Activated naive CD4-positive, alpha-beta T cell treated with anti-CD3 and anti-CD28 coated beads for 36 hours (primary cell): ENCODE measurements at regions of chr4 and their contacts with region 1.

Region 1: DNA sequence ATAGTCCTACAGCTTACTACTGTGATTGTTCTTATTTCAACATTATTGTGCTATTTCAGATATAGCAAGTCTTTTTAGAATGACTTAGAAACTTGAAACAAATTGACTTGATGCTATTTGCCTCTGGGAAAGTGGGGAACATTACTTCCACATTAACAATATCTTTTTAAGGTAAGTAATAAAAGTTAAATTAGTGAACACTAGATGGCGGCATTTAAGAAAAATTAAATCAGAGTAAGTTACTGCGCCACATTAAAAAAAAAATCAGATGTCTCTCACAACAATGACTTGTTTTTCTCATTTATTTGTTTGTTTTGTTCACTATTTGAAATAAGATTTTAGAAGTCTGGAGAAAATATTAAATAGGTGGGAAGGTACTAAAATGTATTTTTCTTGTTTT is 1026.9 kb upstream of the SLIT2 start:
- DNase-seq: no peak
- H3K4me3 Mint-ChIP-seq: no peak overlapping the region
- H3K27ac Mint-ChIP-seq: no peak overlapping the region
- H3K4me1 Mint-ChIP-seq: no peaks in the 10 kb centered on the region
- H3K27me3 Mint-ChIP-seq: no peaks in the 10 kb centered on the region

Region 2: GRCh38 chr4:19508442-19508841 is 283.6 kb after region 1 on chr4:
- CTCF ChIA-PET with region 1: no interaction called
- intact Hi-C with region 1: no loop called
- DNase-seq: no peak
- H3K4me3 Mint-ChIP-seq: no peak overlapping the region
- H3K27ac Mint-ChIP-seq: no peak overlapping the region
- H3K4me1 Mint-ChIP-seq: no peaks in the 10 kb centered on the region
- H3K27me3 Mint-ChIP-seq: no peaks in the 10 kb centered on the region

Region 3: DNA sequence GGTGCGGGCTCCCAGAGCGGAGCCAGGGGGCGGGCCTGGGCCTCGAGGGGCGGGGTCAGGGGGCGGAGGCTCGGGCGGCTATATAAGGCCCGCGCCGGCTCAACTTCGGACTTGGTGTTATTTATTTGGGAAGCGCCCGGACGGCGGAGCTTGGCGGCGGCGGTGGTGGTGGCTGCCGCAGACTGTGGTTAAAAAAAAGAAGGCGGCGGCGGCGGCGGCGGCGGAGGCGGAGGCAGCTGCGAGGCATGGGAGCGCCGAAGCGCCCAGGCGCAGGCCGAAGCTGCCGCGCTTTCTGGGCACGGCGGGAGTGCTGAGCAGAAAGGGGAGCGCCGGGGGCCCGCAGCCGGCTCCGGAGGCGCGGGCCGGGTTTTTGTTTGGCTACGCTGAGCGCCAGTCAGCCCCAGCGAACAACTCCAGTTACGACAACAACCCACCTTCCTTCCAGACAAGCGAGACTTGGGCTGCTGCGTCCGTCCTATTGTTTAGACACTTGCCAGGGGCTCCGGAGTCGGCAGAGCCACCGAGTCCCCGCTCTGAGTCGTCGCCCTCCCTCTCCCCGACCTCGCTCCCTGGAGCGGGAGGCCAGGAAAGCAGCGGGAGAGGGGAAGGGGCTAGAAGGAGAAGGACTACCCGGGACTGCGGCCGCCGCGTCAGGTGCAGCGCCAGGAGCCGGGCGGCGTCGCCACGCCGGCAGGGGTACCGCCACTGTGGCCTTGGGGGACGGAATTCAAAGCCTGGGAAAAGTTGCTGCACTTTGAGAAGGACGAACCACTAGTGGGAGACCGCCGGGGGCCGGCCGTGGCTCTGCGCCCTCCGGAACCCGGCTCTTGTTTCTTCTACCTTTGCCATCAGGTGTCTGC is 1027.2 kb after region 1 on chr4 and contains the start of gene SLIT2:
- CTCF ChIA-PET with region 1: no interaction called
- intact Hi-C with region 1: loop called (anchors 1 kb)
- DNase-seq: peak; percentile 4
- H3K4me3 Mint-ChIP-seq: peak within 1 kb of the TSS; percentile 34
- H3K27ac Mint-ChIP-seq: no peak within 1 kb of the TSS
- H3K4me1 Mint-ChIP-seq: peaks cover 13% of the 10 kb centered on the region
- H3K27me3 Mint-ChIP-seq: peaks cover 46% of the 10 kb centered on the region
- total RNA-seq, gene SLIT2: not detected

Region 4: GRCh38 chr4:20428436-20429160 is 1203.8 kb after region 1 on chr4:
- CTCF ChIA-PET with region 1: no interaction called
- intact Hi-C with region 1: loop called (anchors 2 kb)
- DNase-seq: no peak
- H3K4me3 Mint-ChIP-seq: no peak overlapping the region
- H3K27ac Mint-ChIP-seq: no peak overlapping the region
- H3K4me1 Mint-ChIP-seq: no peaks in the 10 kb centered on the region
- H3K27me3 Mint-ChIP-seq: peaks cover 5% of the 10 kb centered on the region